ENCODE measurements at regions of chr2 and their contacts with region 1.

Region 1: GRCh38 chr2:9555297-9556141 is at the start of gene ADAM17:
- DNase-seq: peak; percentile 95
- H3K4me3 Mint-ChIP-seq: peak within 1 kb of the TSS; percentile 92
- H3K27ac Mint-ChIP-seq: peak within 1 kb of the TSS; percentile 94
- H3K4me1 Mint-ChIP-seq: peaks cover 39% of the 10 kb centered on the region
- H3K27me3 Mint-ChIP-seq: no peaks in the 10 kb centered on the region
- CTCF ChIP-seq: peak; percentile 43
- total RNA-seq, gene ADAM17: 44.3 and 47.3 TPM in 2 replicates

Region 2: DNA sequence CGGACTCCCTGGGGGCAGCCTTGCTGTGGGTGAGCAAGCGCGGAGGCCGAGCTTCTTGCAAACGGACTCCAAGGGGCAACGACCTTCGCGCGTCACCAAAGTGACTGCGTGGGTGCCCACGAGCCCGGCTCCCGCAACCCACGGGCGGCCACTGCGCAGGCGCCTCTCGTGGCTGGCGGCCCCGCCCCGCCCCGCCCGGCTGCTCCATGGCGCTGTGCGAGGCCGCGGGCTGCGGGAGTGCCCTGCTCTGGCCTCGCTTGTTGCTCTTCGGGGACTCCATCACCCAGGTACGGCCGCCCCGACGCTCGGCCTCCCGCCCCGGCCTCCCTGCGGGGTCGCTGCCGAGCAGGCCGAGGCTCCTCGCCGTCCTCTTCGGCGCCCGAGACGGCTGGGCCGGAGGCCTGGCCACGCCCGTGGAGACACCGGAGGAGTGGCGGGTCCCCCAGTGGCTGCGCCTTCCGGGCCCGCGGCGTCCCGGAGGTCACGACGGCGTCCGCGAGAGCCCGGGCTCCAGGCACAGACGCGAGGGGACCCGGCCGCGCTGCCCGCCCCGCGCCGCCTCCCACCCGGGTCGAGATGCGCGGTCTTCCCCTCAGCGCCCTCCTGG is 81.1 kb before region 1 on chr2 and contains the start of gene IAH1:
- CTCF ChIA-PET with region 1: interaction called, 3 read pairs
- POLR2A ChIA-PET with region 1: interaction called, 9 read pairs
- intact Hi-C with region 1: loop called (anchors 5 kb)
- DNase-seq: peak; percentile 48
- H3K4me3 Mint-ChIP-seq: peak within 1 kb of the TSS; percentile 74
- H3K27ac Mint-ChIP-seq: peak within 1 kb of the TSS; percentile 46
- H3K4me1 Mint-ChIP-seq: peaks cover 11% of the 10 kb centered on the region
- H3K27me3 Mint-ChIP-seq: no peaks in the 10 kb centered on the region
- CTCF ChIP-seq: no peak
- total RNA-seq, gene IAH1: 74.7 and 82.3 TPM in 2 replicates

Region 3: GRCh38 chr2:9565436-9566153 is 10.1 kb after region 1 on chr2:
- CTCF ChIA-PET with region 1: interaction called, 6 read pairs
- POLR2A ChIA-PET with region 1: interaction called, 58 read pairs
- intact Hi-C with region 1: no loop called
- DNase-seq: peak; percentile 94
- H3K4me3 Mint-ChIP-seq: peak overlapping the region; percentile 67
- H3K27ac Mint-ChIP-seq: peak overlapping the region; percentile 97
- H3K4me1 Mint-ChIP-seq: peaks cover 9% of the 10 kb centered on the region
- H3K27me3 Mint-ChIP-seq: no peaks in the 10 kb centered on the region
- CTCF ChIP-seq: no peak

Region 4: GRCh38 chr2:9630749-9631483 is 75.4 kb after region 1 on chr2 and contains the start of gene YWHAQ:
- CTCF ChIA-PET with region 1: interaction called, 3 read pairs
- POLR2A ChIA-PET with region 1: interaction called, 118 read pairs
- intact Hi-C with region 1: loop called (anchors 1 kb)
- DNase-seq: peak; percentile 97
- H3K4me3 Mint-ChIP-seq: peak within 1 kb of the TSS; percentile 97
- H3K27ac Mint-ChIP-seq: peak within 1 kb of the TSS; percentile 85
- H3K4me1 Mint-ChIP-seq: peaks cover 24% of the 10 kb centered on the region
- H3K27me3 Mint-ChIP-seq: no peaks in the 10 kb centered on the region
- CTCF ChIP-seq: no peak
- total RNA-seq, gene YWHAQ: 239 TPM in 2 replicates

Region 5: GRCh38 chr2:9703085-9703641 is 147.6 kb after region 1 on chr2:
- CTCF ChIA-PET with region 1: no interaction called
- POLR2A ChIA-PET with region 1: interaction called, 4 read pairs
- intact Hi-C with region 1: loop called (anchors 5 kb)
- DNase-seq: peak; percentile 97
- H3K4me3 Mint-ChIP-seq: no peak overlapping the region
- H3K27ac Mint-ChIP-seq: peak overlapping the region; percentile 49
- H3K4me1 Mint-ChIP-seq: peaks cover 25% of the 10 kb centered on the region
- H3K27me3 Mint-ChIP-seq: no peaks in the 10 kb centered on the region
- CTCF ChIP-seq: no peak

Region 6: DNA sequence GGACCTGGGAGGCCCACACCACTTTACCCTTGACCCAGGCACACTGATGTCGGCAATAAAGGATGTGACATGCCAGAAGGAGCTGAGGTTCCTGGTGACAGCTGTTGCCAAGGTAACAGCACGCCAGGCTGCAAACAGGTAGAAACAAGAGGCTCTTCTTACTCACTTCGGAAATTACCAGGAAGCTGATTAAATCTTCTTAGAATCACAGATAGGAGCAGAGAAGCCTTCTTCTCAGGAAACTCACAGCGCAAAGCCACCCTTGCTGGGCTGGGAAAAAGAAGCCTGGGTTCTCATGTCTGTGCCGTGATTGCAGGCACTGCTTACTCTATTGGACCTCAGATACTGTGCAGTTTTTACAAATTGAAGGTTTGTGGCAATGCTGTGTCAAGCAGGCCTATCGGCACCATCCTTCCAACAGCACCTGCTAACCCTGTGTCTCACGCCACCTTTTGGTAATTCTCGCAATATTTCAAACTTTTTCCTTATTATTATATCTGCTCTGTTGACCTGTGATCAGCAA is 226.7 kb after region 1 on chr2:
- CTCF ChIA-PET with region 1: interaction called, 3 read pairs
- POLR2A ChIA-PET with region 1: interaction called, 12 read pairs
- intact Hi-C with region 1: no loop called
- DNase-seq: peak; percentile 75
- H3K4me3 Mint-ChIP-seq: no peak overlapping the region
- H3K27ac Mint-ChIP-seq: peak overlapping the region; percentile 85
- H3K4me1 Mint-ChIP-seq: peaks cover 17% of the 10 kb centered on the region
- H3K27me3 Mint-ChIP-seq: no peaks in the 10 kb centered on the region
- CTCF ChIP-seq: no peak

Region 7: DNA sequence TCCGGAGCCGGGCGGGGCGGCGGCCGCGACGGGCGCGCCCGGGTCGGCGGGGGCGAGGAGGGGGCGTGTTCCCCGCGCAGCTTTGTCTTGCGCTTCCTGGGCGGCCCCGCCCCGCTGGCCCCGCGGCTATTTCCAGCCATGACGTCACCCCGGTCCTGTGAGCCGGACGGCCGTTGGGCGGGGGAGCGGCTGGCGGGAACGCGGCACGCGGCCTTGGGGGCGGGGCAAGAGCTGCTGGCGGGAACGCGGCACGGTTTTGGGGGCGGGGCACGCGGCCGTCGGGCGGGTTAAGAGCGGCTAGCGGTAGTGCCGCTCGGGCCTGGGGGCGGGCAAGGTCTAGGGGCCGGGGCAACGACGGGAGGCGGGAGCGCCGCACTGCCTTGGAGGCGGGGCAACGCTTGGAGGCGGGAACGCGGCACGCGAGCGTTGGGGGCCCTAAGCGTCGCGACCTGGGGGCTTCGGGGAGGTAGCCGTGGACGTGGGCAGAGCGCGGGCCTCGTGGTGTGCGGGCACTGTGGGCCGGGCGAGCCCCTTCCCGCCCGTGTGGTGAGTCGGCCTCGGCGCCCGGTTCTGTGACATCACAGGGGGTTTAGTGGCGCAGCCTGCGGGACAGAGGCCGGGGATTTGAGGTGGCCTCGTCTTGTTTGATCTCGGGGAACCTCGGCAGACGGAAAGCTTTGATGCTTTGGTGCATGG is 488.5 kb after region 1 on chr2:
- CTCF ChIA-PET with region 1: interaction called, 7 read pairs
- POLR2A ChIA-PET with region 1: no interaction called
- intact Hi-C with region 1: loop called (anchors 10 kb)
- DNase-seq: peak; percentile 92
- H3K4me3 Mint-ChIP-seq: peak overlapping the region; percentile 73
- H3K27ac Mint-ChIP-seq: peak overlapping the region; percentile 75
- H3K4me1 Mint-ChIP-seq: peaks cover 4% of the 10 kb centered on the region
- H3K27me3 Mint-ChIP-seq: no peaks in the 10 kb centered on the region
- CTCF ChIP-seq: no peak

Measured in MCF 10A (cell line).